Pancreas (tissue), 10 donors: ENCODE measurements at regions of chr9 and their contacts with region 1.

Region 1: DNA sequence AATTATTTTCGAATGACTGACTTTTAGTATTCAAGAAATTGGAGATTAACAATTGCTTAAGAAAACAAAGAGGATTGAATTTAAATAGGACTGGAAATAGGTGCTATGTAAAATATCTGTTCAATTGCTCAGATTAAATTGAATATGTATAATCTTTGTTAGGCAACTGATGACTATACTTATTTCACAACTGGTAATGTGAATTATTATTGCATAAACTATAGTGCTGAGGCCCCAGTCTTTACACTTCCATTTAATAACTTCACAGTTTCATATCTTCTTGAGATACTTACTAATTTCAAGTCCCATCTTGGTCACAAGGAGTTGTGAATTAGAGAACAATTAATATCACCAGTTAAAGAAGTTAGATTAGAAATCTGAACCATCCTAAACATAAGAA is 16.7 kb downstream of the CEP78 start:
- DNase-seq: no peak
- ATAC-seq: no peak
- H3K4me3 ChIP-seq: no peak overlapping the region
- H3K27ac ChIP-seq: no peak overlapping the region
- H3K4me1 ChIP-seq: peaks cover 0 to 5% (median 0%) of the 10 kb centered on the region in 3 donors
- H3K27me3 ChIP-seq: no peaks in the 10 kb centered on the region
- CTCF ChIP-seq: no peak

Region 2: DNA sequence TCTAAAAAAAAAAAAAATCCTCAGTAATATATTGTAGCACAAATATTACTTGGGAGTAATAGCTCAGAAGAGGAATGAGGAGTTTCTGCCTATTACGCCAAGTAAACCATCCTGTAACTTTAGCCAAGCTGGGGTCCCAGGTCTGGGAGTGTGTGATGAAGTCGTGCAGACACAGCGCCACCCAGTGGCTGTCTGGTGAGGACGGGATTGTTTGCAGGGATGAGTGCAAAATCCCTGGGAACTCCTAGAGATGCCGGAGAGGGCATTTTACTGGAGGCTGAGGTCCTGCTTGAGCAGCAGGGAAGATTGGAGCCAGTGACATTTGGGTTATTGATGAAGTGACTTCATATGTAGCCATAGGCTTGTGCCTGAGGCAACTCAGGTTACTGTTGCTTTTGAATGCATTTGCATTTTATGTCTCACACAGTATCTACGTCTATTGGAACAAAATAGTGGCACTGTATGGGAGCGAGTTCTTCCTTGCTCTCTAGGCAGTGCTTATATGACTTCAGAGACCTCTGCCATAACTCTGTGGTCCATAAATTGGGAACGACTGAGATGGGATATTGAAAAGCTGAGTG is 117.1 kb after region 1 on chr9:
- intact Hi-C with region 1: loop called in 1 of 3 experiments (anchors 10 kb)
- DNase-seq: peak; percentile 47 to 90 (median 70)
- ATAC-seq: peak; percentile 77 to 96 (median 90)
- H3K4me3 ChIP-seq: no peak overlapping the region
- H3K27ac ChIP-seq: no peak overlapping the region
- H3K4me1 ChIP-seq: no peaks in the 10 kb centered on the region
- H3K27me3 ChIP-seq: no peaks in the 10 kb centered on the region
- CTCF ChIP-seq: peak; percentile 74 to 83 (median 78)